ENCODE measurements at regions of chr1 and their contacts with region 1.

Region 1: DNA sequence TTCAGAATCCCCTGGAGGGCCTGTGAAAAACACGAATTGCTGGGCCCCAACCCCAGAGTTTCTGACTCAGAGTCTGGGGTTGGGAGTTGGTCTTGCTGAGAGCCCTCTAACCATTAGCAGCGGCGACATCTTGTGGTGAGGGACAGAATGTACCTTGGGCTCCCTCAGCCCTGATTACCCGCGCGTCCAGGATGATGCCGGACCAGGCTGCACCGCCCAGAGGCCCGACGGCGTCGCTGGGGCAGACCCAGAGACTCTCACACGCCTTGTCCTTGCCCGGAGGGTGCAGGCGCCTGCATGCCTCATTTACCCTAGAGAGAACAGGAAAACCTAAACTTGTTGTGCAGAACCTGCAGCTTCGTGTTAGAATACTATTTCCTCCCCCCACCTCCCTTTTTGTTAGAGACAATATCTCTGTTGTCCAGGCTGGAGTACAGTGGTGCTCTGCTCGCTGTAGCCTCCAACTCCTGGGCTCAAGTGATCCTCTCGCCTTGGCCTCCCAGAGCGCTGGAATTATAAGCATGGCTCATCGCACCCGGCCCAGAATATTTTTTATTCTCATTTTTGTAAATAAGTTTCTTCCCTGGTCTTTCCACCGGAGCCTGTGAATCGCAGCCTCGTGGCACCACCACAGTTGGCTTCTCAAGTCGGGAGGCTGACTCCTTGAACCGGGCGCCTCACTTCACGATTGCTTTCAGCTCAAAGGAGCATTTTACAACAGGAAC is 22.2 kb upstream of the RD3 start:
- H3K4me3 ChIP-seq: no peak overlapping the region
- H3K27ac ChIP-seq: no peak overlapping the region
- H3K4me1 ChIP-seq: no peaks in the 10 kb centered on the region
- CTCF ChIP-seq: peak; percentile 77

Region 2: GRCh38 chr1:211469938-211470529 is 44.2 kb before region 1 on chr1:
- CTCF ChIA-PET with region 1: interaction called, 59 read pairs
- POLR2A ChIA-PET with region 1: no interaction called
- H3K4me3 ChIP-seq: no peak overlapping the region
- H3K27ac ChIP-seq: no peak overlapping the region
- H3K4me1 ChIP-seq: no peaks in the 10 kb centered on the region
- CTCF ChIP-seq: peak; percentile 80

Region 3: GRCh38 chr1:211484755-211485479 is 29.3 kb before region 1 on chr1:
- CTCF ChIA-PET with region 1: interaction called, 12 read pairs
- POLR2A ChIA-PET with region 1: no interaction called
- H3K4me3 ChIP-seq: no peak overlapping the region
- H3K27ac ChIP-seq: no peak overlapping the region
- H3K4me1 ChIP-seq: no peaks in the 10 kb centered on the region
- CTCF ChIP-seq: no peak

Region 4: DNA sequence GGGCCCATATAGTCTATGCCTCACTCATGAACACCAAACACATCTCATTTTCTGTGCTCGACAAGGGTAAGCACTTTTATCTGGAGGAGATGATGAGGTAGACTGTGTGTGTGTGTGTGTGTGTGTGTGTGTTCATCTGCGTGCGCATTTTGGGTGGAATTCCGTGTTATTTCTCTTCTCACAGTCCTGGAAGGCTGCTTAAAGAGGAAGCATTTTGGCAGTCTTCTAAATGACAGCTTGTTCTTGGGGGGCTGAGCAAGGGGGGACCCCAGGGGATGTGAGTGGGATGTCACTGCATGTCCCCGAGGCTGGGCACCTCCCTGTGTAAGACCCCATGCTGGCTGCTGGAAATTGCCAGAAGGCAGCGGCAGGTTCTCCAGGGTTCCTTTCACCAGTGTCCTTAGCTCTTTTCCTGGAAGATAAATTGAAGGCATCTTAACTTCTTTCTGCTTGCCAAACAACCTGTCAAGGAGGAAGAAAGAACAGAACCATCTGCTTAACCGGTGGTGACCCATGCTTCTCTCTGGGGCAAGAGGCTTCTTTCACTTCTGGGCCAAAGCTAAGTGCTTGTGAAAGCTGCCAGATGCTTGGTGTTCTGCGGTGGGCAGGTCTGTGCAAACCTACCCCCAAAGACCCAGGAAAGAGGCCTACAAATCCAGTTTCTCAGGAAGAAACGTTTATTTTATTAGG is 12.3 kb before region 1 on chr1:
- CTCF ChIA-PET with region 1: interaction called, 31 read pairs
- POLR2A ChIA-PET with region 1: no interaction called
- H3K4me3 ChIP-seq: no peak overlapping the region
- H3K27ac ChIP-seq: no peak overlapping the region
- H3K4me1 ChIP-seq: no peaks in the 10 kb centered on the region
- CTCF ChIP-seq: no peak

Region 5: GRCh38 chr1:211654838-211655787 is 140.9 kb after region 1 on chr1:
- CTCF ChIA-PET with region 1: interaction called, 73 read pairs
- POLR2A ChIA-PET with region 1: no interaction called
- H3K4me3 ChIP-seq: no peak overlapping the region
- H3K27ac ChIP-seq: no peak overlapping the region
- H3K4me1 ChIP-seq: 0 out of 2 replicates have a peak, but pooled peaks cover 4% of the 10 kb centered on the region
- CTCF ChIP-seq: peak; percentile 80

Region 6: DNA sequence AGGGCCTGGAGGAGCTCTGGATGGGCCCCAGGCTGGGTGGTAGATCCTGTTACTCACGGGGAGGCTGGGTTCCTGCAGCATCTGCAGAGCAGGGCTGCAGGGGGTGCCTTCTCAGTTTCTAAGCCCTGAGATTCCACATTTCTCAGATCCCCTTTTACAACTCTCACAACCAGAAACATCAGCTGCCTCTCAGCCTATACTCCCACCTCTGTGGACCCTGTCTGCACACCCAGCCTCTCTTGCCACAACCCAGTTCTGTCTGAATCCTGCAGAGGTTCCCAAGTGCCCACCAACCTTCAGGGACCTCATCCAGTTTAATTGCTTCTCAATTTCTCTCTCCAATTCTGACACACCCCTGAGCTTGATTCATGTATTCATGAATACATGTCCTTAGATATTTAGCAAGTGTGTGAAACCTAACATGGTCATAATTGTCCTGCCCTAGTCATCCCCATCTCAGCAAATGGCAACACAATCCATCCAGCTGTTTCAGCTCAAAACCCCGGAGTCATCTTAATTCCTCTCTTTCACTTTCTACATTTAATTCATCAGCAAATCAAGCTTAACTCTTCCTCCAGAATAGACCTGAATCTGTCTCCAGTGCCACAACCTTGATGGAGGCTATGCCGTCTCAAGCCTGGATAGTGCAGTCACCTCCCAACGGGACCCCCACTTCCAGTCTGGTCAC is 218.2 kb after region 1 on chr1:
- CTCF ChIA-PET with region 1: no interaction called
- POLR2A ChIA-PET with region 1: no interaction called
- H3K4me3 ChIP-seq: no peak overlapping the region
- H3K27ac ChIP-seq: no peak overlapping the region
- H3K4me1 ChIP-seq: peaks cover 8% of the 10 kb centered on the region
- CTCF ChIP-seq: no peak

Measured in HEK293 (cell line).